Endothelial cell of umbilical vein (primary cell): ENCODE measurements at regions of chr4 and their contacts with region 1.

Region 1: GRCh38 chr4:10089346-10089745 is 27.3 kb downstream of the WDR1 start:
- DNase-seq: peak; percentile 85
- H3K4me3 ChIP-seq: no peak overlapping the region
- H3K27ac ChIP-seq: peak overlapping the region; percentile 43
- H3K4me1 ChIP-seq: peaks cover 43% of the 10 kb centered on the region
- H3K27me3 ChIP-seq: no peaks in the 10 kb centered on the region
- CTCF ChIP-seq: peak; percentile 84 to 95
- POLR2A ChIP-seq: peak; percentile 49

Region 2: DNA sequence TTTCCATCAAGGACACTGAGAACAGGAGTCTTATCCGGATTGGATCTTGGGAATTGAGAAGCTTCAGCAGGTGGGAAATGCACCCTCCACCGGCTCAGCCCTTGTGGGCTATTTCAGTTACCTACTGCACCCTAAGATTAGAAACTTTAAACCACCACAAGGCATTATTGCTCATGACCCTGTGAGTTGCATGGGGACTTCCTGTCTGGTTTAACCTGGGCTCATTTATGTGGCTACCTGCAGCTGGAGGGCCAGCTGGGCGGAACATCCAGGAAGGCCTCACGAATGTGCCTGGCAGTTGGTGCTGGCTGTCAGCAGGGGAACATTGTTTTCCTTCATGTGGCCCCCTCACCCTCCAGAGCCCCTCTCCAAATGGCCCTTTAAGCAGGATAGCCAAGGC is 481.0 kb before region 1 on chr4:
- CTCF ChIA-PET with region 1: no interaction called
- POLR2A ChIA-PET with region 1: no interaction called
- dilution Hi-C with region 1: no loop called
- intact Hi-C with region 1: no loop called
- DNase-seq: no peak
- H3K4me3 ChIP-seq: no peak overlapping the region
- H3K27ac ChIP-seq: no peak overlapping the region
- H3K4me1 ChIP-seq: no peaks in the 10 kb centered on the region
- H3K27me3 ChIP-seq: no peaks in the 10 kb centered on the region
- CTCF ChIP-seq: no peak
- POLR2A ChIP-seq: no peak

Region 3: GRCh38 chr4:10054571-10055041 is 34.7 kb before region 1 on chr4:
- CTCF ChIA-PET with region 1: no interaction called
- POLR2A ChIA-PET with region 1: no interaction called
- dilution Hi-C with region 1: no loop called
- intact Hi-C with region 1: no loop called
- DNase-seq: peak; percentile 74
- H3K4me3 ChIP-seq: no peak overlapping the region
- H3K27ac ChIP-seq: no peak overlapping the region
- H3K4me1 ChIP-seq: peaks cover 6% of the 10 kb centered on the region
- H3K27me3 ChIP-seq: no peaks in the 10 kb centered on the region
- CTCF ChIP-seq: no peak
- POLR2A ChIP-seq: no peak

Region 4: GRCh38 chr4:10074767-10075105 is 14.6 kb before region 1 on chr4:
- CTCF ChIA-PET with region 1: interaction called, 10 read pairs
- POLR2A ChIA-PET with region 1: no interaction called
- dilution Hi-C with region 1: no loop called
- intact Hi-C with region 1: no loop called
- DNase-seq: peak; percentile 53
- H3K4me3 ChIP-seq: no peak overlapping the region
- H3K27ac ChIP-seq: no peak overlapping the region
- H3K4me1 ChIP-seq: peaks cover 23% of the 10 kb centered on the region
- H3K27me3 ChIP-seq: no peaks in the 10 kb centered on the region
- CTCF ChIP-seq: peak; percentile 53 to 61
- POLR2A ChIP-seq: peak; percentile 20

Region 5: DNA sequence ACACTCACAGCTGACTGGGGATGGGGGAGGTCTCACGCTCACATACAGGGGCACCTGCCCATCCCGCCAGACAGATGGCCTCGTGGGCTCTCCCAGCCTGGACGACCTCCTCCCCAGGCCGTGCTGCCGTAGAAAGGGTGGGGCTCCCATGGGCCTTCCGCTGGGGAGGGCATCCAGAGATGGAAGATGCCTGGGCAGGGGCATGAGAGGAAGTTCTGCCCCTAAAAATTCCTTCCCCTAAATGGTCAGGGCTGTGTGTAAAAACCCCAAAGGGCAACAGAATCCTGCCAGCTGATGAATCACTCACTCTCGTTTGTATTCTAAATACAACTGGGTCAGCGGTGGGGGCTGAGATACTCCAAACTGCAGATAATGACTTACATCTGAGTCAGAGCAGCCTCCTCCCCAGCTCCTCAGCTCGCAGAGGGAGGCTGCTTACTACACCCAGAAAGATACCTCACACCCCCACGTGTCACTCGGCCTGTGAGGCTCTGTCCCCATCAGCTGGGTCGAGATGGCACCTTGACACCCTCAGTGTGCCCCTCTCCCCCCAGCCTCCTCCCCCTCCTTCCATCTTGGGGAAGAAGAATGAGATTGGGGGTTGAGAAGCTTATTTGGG is 17.2 kb after region 1 on chr4:
- CTCF ChIA-PET with region 1: interaction called, 40 read pairs
- POLR2A ChIA-PET with region 1: interaction called, 11 read pairs
- dilution Hi-C with region 1: no loop called
- intact Hi-C with region 1: no loop called
- DNase-seq: peak; percentile 90
- H3K4me3 ChIP-seq: no peak overlapping the region
- H3K27ac ChIP-seq: peak overlapping the region; percentile 58
- H3K4me1 ChIP-seq: peaks cover 50% of the 10 kb centered on the region
- H3K27me3 ChIP-seq: no peaks in the 10 kb centered on the region
- CTCF ChIP-seq: no peak
- POLR2A ChIP-seq: peak; percentile 13

Region 6: DNA sequence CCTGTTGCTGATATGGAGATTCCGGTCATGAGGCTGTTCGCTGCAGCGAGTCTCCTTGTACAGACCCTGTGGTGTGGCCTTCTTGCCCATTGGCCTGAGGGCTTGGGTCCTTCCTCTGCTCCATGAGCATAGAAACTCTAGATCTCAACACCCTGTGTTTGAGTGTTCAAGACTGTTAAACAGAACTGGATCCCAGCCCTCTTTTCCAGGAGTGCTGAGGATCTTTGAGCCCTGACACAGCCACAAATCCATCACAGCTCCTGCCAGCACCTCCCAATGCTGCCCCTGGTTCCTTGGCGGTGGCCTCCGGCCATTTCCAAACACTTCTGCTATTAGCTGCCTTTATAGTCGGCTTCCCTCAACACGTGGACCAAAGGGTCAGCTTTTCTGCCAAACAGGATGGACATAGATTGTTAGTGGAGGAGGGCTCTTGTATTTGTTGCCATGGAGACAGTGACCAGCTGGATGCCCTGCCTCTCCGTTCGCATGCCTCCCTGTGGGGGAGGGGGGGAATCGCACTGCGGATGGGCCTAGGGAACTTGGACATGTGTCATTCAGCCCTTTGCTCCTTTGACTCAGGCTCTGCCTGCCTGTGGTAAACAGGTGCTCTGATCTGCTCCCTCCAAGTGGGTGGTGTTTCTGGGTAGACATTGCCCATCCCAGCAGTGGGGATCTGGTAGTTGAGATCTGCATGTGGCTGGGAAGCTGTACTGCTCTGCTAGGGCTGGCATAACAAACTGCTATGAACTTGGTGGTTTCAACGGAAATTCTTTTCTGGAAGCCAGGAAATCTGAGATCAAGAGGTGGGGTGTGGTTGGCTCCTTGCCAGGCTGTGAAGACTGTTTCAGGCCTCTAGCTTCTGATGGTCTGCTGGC is 34.1 kb after region 1 on chr4:
- CTCF ChIA-PET with region 1: interaction called, 5 read pairs
- POLR2A ChIA-PET with region 1: interaction called, 49 read pairs
- dilution Hi-C with region 1: no loop called
- intact Hi-C with region 1: loop called (anchors 1 kb)
- DNase-seq: peak; percentile 94
- H3K4me3 ChIP-seq: no peak overlapping the region
- H3K27ac ChIP-seq: peak overlapping the region; percentile 66
- H3K4me1 ChIP-seq: peaks cover 22% of the 10 kb centered on the region
- H3K27me3 ChIP-seq: no peaks in the 10 kb centered on the region
- CTCF ChIP-seq: no peak
- POLR2A ChIP-seq: no peak